ENCODE measurements at regions of chr14 and their contacts with region 1.

Region 1: DNA sequence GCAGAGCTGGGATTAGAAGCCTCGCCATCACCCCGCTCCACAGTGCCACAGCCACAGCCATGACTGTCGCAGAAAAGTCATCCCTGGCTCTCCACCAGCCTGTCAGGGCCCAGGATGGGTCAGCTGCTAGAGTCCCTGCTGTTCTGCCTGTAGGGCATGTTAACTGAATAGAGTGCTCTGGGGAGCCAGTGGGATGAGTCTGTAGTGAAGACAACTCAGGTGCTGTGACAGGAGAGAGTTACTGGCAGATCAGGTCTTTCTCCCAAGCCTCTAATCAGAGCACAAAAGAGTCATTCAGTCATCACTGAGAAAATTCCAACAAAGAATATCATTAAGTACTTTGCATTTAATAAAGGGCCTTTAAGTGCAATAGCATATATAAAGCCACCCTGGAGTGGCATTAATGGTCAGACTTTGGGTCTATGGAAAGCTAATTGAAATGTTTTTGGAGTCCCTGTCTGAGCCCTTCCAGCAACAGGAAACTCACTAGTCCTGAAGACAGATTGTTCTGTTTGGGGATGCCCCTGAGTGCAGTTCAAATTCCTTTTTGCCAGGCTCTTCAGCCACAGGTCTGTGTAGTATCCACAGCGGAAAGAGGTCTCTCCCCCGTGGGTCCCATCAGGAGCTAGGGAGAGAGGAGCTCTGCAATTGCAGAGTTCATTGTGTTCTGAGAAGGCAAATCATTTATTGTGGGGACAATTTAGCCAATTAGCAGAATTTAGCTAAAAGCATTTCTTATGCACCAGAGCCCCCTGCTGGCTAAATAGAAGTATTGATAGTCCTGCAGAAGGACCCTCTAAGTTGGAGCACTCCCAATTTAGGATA is 45.2 kb upstream of the C14orf132 start:
- DNase-seq: no peak
- H3K4me3 ChIP-seq: no peak overlapping the region
- H3K27ac ChIP-seq: no peak overlapping the region
- H3K4me1 ChIP-seq: no peaks in the 10 kb centered on the region
- H3K27me3 ChIP-seq: peaks cover 0 to 62% (median 0%) of the 10 kb centered on the region in 4 donors
- CTCF ChIP-seq: peak; percentile 70 to 84 (median 76)
- POLR2A ChIP-seq: no peak

Region 2: GRCh38 chr14:95561001-95561412 is 433.0 kb before region 1 on chr14:
- intact Hi-C with region 1: loop called (anchors 5 kb)
- DNase-seq: peak; percentile 21
- H3K4me3 ChIP-seq: no peak overlapping the region
- H3K27ac ChIP-seq: no peak overlapping the region
- H3K4me1 ChIP-seq: peaks cover 0 to 37% (median 4%) of the 10 kb centered on the region in 3 donors
- H3K27me3 ChIP-seq: no peaks in the 10 kb centered on the region
- CTCF ChIP-seq: peak; percentile 94 to 99 (median 98)
- POLR2A ChIP-seq: no peak

Region 3: DNA sequence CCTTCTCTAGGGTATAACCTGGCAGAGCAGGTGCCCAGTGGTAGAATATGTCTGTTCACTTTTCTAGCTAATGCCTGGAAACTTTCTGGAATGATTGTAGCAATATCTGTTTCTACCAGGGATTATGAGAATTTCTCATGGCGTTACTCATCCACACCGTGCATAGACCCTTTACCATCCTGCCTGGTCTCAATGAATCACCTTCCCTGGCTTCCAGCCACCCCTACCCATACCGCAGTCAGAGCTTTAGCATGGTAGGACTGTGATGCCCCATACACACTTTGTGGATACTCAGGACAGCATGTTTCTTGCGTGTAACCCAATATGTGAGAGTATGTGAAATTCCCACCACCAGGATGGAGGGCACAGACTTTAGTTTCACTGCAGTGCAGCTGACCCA is 71.9 kb before region 1 on chr14:
- intact Hi-C with region 1: no loop called
- DNase-seq: no peak
- H3K4me3 ChIP-seq: no peak overlapping the region
- H3K27ac ChIP-seq: no peak overlapping the region
- H3K4me1 ChIP-seq: no peaks in the 10 kb centered on the region
- H3K27me3 ChIP-seq: peaks cover 0 to 39% (median 0%) of the 10 kb centered on the region in 4 donors
- CTCF ChIP-seq: no peak
- POLR2A ChIP-seq: no peak

Region 4: DNA sequence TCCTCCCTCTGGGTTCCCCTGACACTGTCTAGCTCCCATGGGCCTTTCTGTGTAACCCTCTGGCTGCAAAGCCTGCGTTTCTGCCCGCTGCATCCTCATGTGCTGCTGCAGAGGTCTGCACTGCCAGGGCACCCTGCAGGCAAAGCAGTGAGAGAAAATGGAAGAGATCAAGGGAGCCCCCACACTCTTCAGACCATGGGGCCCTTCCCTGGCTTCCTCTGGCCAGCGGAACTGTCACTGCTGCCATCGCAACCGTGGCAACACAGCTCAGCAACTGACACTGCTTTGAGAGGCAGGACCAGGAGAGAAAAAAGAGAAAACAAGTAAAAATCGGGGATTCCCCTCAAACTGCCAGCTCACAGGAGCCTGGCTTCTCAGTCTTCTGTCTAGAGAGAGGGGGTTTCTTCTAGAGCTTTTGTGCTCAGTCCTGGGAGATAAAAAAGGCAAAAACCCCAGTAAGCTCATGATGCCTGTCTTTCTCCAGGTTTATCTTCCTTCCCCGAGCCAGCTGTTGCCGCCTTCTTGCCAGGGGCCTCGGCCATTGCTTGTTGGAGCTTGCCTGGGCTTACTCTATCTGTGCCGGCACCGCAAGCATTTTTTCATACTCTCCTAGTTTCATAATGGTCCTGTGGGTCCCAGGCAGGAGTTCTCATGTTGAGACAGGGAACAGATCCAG is 84.1 kb after region 1 on chr14:
- intact Hi-C with region 1: no loop called
- DNase-seq: no peak
- H3K4me3 ChIP-seq: no peak overlapping the region
- H3K27ac ChIP-seq: peak overlapping the region in 1 of 4 donors; percentile 54
- H3K4me1 ChIP-seq: peaks cover 6 to 21% (median 8%) of the 10 kb centered on the region in 3 donors
- H3K27me3 ChIP-seq: no peaks in the 10 kb centered on the region
- CTCF ChIP-seq: no peak
- POLR2A ChIP-seq: no peak